AG04449 (cell line): ENCODE measurements at regions of chr2 and their contacts with region 1.

Region 1: DNA sequence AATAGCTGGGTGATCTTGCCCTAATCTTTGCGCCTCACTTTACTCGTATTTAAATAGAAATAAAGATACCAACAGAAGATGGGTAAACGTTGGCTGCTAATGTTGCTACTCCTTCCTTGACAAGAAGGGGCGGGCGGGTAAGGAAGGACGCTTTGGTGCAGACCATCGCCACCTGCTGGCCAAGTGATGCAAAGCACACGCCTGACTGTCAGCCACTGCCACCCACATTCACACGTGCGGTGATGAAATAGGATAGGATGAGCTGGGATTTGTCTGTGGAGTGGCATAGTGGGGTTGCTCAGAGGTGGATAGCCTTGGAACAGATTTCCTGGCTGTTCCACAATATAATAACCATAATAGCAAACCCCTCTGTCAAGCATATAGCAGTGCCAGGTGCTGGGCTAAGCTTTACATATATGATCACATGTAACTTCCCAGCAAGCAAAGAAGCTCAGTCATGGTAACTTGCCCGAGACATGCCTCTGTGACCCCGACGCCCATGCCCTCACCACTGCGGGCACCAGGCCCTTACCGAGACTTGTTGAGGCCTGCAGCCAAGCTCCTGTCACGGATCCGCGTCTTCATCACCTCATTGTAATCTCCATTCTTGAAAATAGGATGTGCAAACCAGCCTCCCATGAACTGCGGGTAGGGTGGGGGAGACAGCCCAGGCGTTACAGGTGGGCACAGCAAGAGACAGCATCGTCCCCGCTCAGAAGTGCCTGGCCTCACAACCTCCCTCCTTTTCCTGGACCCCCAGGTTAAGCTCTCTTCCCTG is 39.3 kb downstream of the LCT start:
- DNase-seq: no peak
- H3K4me3 ChIP-seq: no peak overlapping the region
- CTCF ChIP-seq: peak; percentile 97

Region 2: GRCh38 chr2:134988994-134989605 is 808.6 kb before region 1 on chr2:
- CTCF ChIA-PET with region 1: interaction called, 14 read pairs
- POLR2A ChIA-PET with region 1: no interaction called
- DNase-seq: no peak
- H3K4me3 ChIP-seq: no peak overlapping the region
- CTCF ChIP-seq: peak; percentile 9

Region 3: DNA sequence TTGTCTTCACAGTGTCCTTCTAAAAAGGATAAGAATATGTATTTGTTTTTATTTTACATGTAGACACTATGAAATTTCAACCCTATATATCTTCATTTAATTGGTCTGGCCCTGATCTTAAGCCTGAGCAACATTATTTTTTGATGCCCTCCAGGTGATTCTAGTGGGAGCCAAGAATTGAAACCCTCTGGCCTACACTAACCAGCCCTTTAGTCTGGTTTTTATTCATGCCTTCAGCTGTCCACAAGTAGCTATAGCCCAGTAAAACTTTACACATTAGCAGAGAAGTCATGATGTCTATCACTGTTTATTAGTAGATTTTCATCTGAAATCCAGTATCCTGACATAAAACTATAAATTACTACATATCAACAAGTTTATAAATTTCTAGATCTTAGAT is 108.7 kb before region 1 on chr2:
- CTCF ChIA-PET with region 1: no interaction called
- POLR2A ChIA-PET with region 1: no interaction called
- DNase-seq: no peak
- H3K4me3 ChIP-seq: no peak overlapping the region
- CTCF ChIP-seq: no peak

Region 4: GRCh38 chr2:135756692-135757091 is 41.0 kb before region 1 on chr2:
- CTCF ChIA-PET with region 1: interaction called, 12 read pairs
- POLR2A ChIA-PET with region 1: no interaction called
- DNase-seq: no peak
- H3K4me3 ChIP-seq: no peak overlapping the region
- CTCF ChIP-seq: no peak

Region 5: GRCh38 chr2:135785032-135785431 is 12.7 kb before region 1 on chr2:
- CTCF ChIA-PET with region 1: interaction called, 127 read pairs
- POLR2A ChIA-PET with region 1: interaction called, 3 read pairs
- DNase-seq: no peak
- H3K4me3 ChIP-seq: no peak overlapping the region
- CTCF ChIP-seq: no peak

Region 6: GRCh38 chr2:135825550-135826176 is 28.0 kb after region 1 on chr2:
- CTCF ChIA-PET with region 1: interaction called, 78 read pairs
- POLR2A ChIA-PET with region 1: no interaction called
- DNase-seq: no peak
- H3K4me3 ChIP-seq: no peak overlapping the region
- CTCF ChIP-seq: no peak

Region 7: GRCh38 chr2:135839713-135840112 is 42.0 kb after region 1 on chr2:
- CTCF ChIA-PET with region 1: interaction called, 22 read pairs
- POLR2A ChIA-PET with region 1: no interaction called
- DNase-seq: peak; percentile 80
- H3K4me3 ChIP-seq: no peak overlapping the region
- CTCF ChIP-seq: no peak